MCF 10A (cell line): ENCODE measurements at regions of chr2 and their contacts with region 1.

Region 1: GRCh38 chr2:216498418-216499413 is at the start of gene RPL37A:
- DNase-seq: peak; percentile 97
- H3K4me3 Mint-ChIP-seq: peak within 1 kb of the TSS; percentile 97
- H3K27ac Mint-ChIP-seq: peak within 1 kb of the TSS; percentile 99
- H3K4me1 Mint-ChIP-seq: peaks cover 28% of the 10 kb centered on the region
- H3K27me3 Mint-ChIP-seq: no peaks in the 10 kb centered on the region
- CTCF ChIP-seq: no peak
- total RNA-seq, gene RPL37A: 4,349 and 4,745 TPM in 2 replicates

Region 2: GRCh38 chr2:216023055-216023648 is 475.6 kb before region 1 on chr2:
- CTCF ChIA-PET with region 1: no interaction called
- POLR2A ChIA-PET with region 1: no interaction called
- intact Hi-C with region 1: no loop called
- DNase-seq: peak; percentile 70
- H3K4me3 Mint-ChIP-seq: no peak overlapping the region
- H3K27ac Mint-ChIP-seq: no peak overlapping the region
- H3K4me1 Mint-ChIP-seq: no peaks in the 10 kb centered on the region
- H3K27me3 Mint-ChIP-seq: no peaks in the 10 kb centered on the region
- CTCF ChIP-seq: peak; percentile 55

Region 3: DNA sequence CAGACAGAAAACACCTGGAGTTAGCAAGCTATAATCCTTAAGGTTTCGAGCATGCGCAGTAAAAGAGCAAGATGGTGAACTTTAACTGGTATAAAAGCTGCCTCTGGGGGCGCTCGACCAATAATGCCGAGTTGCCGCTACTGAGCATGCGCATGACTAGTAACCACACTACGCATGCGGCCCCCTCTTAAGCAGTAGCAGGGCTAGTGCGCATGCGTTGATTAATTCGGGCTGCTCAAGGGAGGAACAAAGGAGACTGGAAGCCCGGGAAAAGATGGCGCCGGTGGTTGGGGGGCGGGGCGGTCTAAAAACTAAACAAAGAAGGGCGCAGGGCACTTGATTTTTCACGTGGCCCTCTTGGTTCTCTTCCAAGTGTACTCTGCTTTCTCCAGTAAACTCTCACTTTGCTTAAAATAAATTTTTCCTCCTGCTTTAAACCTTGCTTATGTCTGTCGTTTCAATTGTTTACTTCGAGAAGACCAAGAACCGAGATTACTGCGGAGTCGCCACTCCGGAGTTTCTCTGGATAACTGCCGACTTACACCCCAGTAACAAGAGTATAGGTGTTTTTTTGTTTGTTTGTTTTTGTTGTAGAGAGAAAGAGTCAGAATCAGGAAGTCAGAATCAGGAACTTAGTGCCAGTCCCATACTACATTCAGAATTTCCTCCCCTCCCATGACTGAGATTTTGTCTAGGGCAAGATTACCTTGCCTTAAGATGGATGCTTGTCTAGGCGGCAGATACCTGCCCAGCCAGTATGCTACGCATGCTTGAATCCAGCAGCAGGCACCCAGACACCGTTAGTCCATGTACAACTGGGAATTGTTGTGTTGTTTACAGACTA is 383.8 kb before region 1 on chr2:
- CTCF ChIA-PET with region 1: interaction called, 6 read pairs
- POLR2A ChIA-PET with region 1: interaction called, 17 read pairs
- intact Hi-C with region 1: loop called (anchors 10 kb)
- DNase-seq: peak; percentile 99
- H3K4me3 Mint-ChIP-seq: peak overlapping the region; percentile 96
- H3K27ac Mint-ChIP-seq: peak overlapping the region; percentile 99
- H3K4me1 Mint-ChIP-seq: peaks cover 35% of the 10 kb centered on the region
- H3K27me3 Mint-ChIP-seq: no peaks in the 10 kb centered on the region
- CTCF ChIP-seq: peak; percentile 67

Region 4: DNA sequence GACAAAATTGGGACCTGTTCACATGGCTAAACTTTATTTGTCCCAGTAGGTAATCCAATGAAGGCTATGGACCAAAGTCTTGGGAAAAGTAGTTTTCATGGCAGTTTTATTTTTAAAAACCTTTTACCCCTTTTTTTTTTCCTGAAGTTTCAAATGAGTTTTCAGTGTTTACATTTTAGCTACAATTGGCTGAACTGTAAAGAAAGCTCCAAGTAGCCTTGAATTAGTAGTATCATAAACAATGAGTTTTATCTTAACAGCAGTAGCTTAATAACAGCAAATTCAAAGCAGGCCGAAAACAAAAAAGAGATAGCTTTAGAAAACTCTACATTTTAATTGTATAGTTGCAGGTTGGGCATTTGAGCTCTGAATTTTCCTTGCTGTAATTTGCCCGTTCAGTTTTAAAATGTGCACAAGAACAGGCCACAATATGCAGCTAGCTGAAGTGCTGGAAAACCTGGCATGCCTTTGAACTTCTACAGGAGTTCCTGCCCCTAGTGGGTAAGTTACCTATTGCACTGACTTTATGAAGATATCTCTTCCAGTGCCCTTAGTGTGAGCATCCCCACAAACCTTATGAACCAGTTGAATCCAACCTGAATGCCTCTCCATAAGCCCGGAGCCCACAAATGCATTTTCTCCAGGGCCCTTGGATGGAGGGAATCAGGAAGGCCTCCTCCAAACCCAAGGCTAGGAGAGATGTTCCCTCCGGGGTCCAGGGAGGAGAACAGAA is 282.9 kb before region 1 on chr2:
- CTCF ChIA-PET with region 1: no interaction called
- POLR2A ChIA-PET with region 1: no interaction called
- intact Hi-C with region 1: loop called (anchors 10 kb)
- DNase-seq: peak; percentile 48
- H3K4me3 Mint-ChIP-seq: no peak overlapping the region
- H3K27ac Mint-ChIP-seq: no peak overlapping the region
- H3K4me1 Mint-ChIP-seq: peaks cover 28% of the 10 kb centered on the region
- H3K27me3 Mint-ChIP-seq: no peaks in the 10 kb centered on the region
- CTCF ChIP-seq: peak; percentile 33

Region 5: GRCh38 chr2:216242365-216242764 is 256.4 kb before region 1 on chr2:
- CTCF ChIA-PET with region 1: no interaction called
- POLR2A ChIA-PET with region 1: no interaction called
- intact Hi-C with region 1: no loop called
- DNase-seq: no peak
- H3K4me3 Mint-ChIP-seq: no peak overlapping the region
- H3K27ac Mint-ChIP-seq: no peak overlapping the region
- H3K4me1 Mint-ChIP-seq: no peaks in the 10 kb centered on the region
- H3K27me3 Mint-ChIP-seq: no peaks in the 10 kb centered on the region
- CTCF ChIP-seq: no peak

Region 6: DNA sequence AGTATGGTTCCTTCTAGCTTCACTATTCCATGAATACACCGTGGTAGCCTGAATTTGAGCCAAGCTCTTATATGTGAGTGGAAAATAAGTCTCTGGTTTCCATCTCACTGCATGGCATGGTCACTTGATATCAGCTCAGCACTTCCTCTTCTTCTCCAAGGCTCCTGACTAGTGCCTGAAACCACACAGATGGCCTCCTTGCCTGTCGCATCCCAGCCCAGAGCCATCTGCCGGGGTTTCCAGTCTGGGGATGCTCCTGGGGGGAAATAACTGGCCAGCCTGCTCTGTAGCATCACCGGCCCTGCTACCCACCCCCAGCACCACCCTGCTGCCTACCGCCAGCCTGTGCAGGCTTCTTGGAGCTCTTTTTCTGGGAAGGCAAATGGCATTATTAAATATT is 118.7 kb before region 1 on chr2:
- CTCF ChIA-PET with region 1: no interaction called
- POLR2A ChIA-PET with region 1: no interaction called
- intact Hi-C with region 1: no loop called
- DNase-seq: no peak
- H3K4me3 Mint-ChIP-seq: no peak overlapping the region
- H3K27ac Mint-ChIP-seq: no peak overlapping the region
- H3K4me1 Mint-ChIP-seq: no peaks in the 10 kb centered on the region
- H3K27me3 Mint-ChIP-seq: peaks cover 13% of the 10 kb centered on the region
- CTCF ChIP-seq: no peak

Region 7: GRCh38 chr2:216478151-216478550 is 20.6 kb before region 1 on chr2:
- CTCF ChIA-PET with region 1: no interaction called
- POLR2A ChIA-PET with region 1: interaction called, 12 read pairs
- intact Hi-C with region 1: no loop called
- DNase-seq: peak; percentile 92
- H3K4me3 Mint-ChIP-seq: no peak overlapping the region
- H3K27ac Mint-ChIP-seq: no peak overlapping the region
- H3K4me1 Mint-ChIP-seq: peaks cover 9% of the 10 kb centered on the region
- H3K27me3 Mint-ChIP-seq: no peaks in the 10 kb centered on the region
- CTCF ChIP-seq: no peak

Region 8: GRCh38 chr2:216606551-216607276 is 108.0 kb after region 1 on chr2:
- CTCF ChIA-PET with region 1: no interaction called
- POLR2A ChIA-PET with region 1: no interaction called
- intact Hi-C with region 1: no loop called
- DNase-seq: no peak
- H3K4me3 Mint-ChIP-seq: no peak overlapping the region
- H3K27ac Mint-ChIP-seq: no peak overlapping the region
- H3K4me1 Mint-ChIP-seq: peaks cover 13% of the 10 kb centered on the region
- H3K27me3 Mint-ChIP-seq: peaks cover 18% of the 10 kb centered on the region
- CTCF ChIP-seq: no peak